CD4-positive, alpha-beta memory T cell (primary cell): ENCODE measurements at regions of chrX and their contacts with region 1.

Region 1: DNA sequence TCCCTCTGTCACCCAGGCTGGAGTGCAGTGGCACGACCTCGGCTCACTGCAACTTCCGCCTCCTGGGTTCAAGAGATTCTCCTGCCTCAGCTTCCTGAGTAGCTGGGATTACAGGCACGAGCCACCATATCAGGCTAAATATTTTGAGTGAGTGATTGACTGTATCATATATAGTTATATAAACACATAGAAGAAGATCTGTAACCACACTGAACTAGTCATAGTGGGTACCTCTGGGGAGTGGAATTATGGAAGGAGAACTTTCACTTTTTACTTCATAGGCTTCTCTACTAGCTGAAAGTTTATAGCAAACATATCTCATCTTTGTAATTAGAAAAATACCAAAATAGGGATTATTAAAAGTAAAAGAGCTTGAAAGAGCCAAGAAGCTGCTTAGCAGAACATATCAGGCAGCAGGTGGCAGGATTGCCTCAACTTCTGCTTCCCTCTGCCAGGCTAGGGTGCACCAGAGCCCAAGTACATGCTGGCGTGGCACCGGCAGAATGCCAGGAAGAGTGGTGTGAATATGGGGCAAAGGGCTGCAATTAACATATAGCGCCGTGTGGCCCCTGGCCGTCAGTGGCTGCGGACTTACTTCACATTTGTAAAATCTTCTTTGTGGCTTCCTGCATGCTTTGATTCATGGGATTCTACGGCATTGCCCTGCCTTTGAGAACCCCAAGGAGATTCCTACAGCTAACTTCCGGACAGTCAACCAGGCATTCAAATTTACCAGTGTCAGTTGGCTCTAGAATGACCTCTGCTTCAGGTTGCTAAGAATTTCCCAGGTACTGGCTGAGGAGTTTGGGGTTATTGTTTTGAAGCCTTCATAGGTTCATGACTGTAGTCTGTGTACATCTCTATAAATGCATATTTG is 39.4 kb upstream of the CD40LG start:
- DNase-seq: peak; percentile 63 to 71 (median 68)
- H3K4me3 ChIP-seq: peak overlapping the region in 1 of 2 donors; percentile 19
- H3K4me3 Mint-ChIP-seq: peak overlapping the region; percentile 55 to 77 (median 67)
- H3K27ac ChIP-seq: peak overlapping the region; percentile 37
- H3K27ac Mint-ChIP-seq: peak overlapping the region; percentile 82 to 94 (median 87)
- H3K4me1 ChIP-seq: peaks cover 46% of the 10 kb centered on the region
- H3K4me1 Mint-ChIP-seq: peaks cover 21 to 58% (median 42%) of the 10 kb centered on the region in 4 donors
- H3K27me3 ChIP-seq: no peaks in the 10 kb centered on the region
- H3K27me3 Mint-ChIP-seq: no peaks in the 10 kb centered on the region

Region 2: GRCh38 chrX:136577552-136577951 is 31.0 kb before region 1 on chrX:
- CTCF ChIA-PET with region 1: interaction called, 71 read pairs
- POLR2A ChIA-PET with region 1: interaction called, 16 read pairs
- intact Hi-C with region 1: loop called (anchors 5 kb)
- DNase-seq: peak; percentile 67 to 77 (median 72)
- H3K4me3 ChIP-seq: no peak overlapping the region
- H3K4me3 Mint-ChIP-seq: peak overlapping the region in 5 of 8 donors; percentile 31 to 58 (median 44)
- H3K27ac ChIP-seq: peak overlapping the region; percentile 38
- H3K27ac Mint-ChIP-seq: peak overlapping the region; percentile 59 to 93 (median 89)
- H3K4me1 ChIP-seq: peaks cover 25% of the 10 kb centered on the region
- H3K4me1 Mint-ChIP-seq: peaks cover 10 to 33% (median 17%) of the 10 kb centered on the region in 4 donors
- H3K27me3 ChIP-seq: no peaks in the 10 kb centered on the region
- H3K27me3 Mint-ChIP-seq: no peaks in the 10 kb centered on the region

Region 3: DNA sequence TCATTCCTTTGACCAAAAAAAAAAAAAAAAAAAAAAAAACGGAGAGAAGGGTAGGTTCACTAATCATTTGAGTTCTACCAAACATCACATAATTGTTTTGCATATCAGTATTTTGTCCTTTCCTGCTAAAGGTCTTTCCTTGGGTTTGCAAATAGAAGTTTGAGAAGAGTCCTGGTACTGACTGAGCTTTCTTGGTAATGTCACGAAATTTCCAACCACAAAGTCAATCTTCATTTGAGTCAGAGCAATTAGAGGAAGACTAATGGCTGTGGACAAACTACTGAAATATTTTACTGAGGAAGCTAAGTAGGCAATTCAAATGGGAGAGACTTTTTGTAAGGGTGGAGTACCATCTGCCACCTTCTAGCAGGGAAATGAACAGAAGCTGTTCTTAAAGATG is 17.7 kb after region 1 on chrX:
- CTCF ChIA-PET with region 1: interaction called, 7 read pairs
- POLR2A ChIA-PET with region 1: interaction called, 21 read pairs
- intact Hi-C with region 1: no loop called
- DNase-seq: no peak
- H3K4me3 ChIP-seq: no peak overlapping the region
- H3K4me3 Mint-ChIP-seq: peak overlapping the region in 7 of 8 donors; percentile 15 to 82 (median 24)
- H3K27ac ChIP-seq: no peak overlapping the region
- H3K27ac Mint-ChIP-seq: peak overlapping the region in 6 of 7 donors; percentile 32 to 94 (median 76)
- H3K4me1 ChIP-seq: peaks cover 90% of the 10 kb centered on the region
- H3K4me1 Mint-ChIP-seq: peaks cover 59 to 91% (median 77%) of the 10 kb centered on the region in 4 donors
- H3K27me3 ChIP-seq: no peaks in the 10 kb centered on the region
- H3K27me3 Mint-ChIP-seq: no peaks in the 10 kb centered on the region

Region 4: GRCh38 chrX:136646602-136647239 is 38.2 kb after region 1 on chrX:
- CTCF ChIA-PET with region 1: interaction called, 30 read pairs
- POLR2A ChIA-PET with region 1: interaction called, 148 read pairs
- intact Hi-C with region 1: no loop called
- DNase-seq: peak; percentile 60 to 79 (median 64)
- H3K4me3 ChIP-seq: peak overlapping the region in 1 of 2 donors; percentile 3
- H3K4me3 Mint-ChIP-seq: peak overlapping the region; percentile 89 to 99 (median 97)
- H3K27ac ChIP-seq: peak overlapping the region; percentile 82
- H3K27ac Mint-ChIP-seq: peak overlapping the region; percentile 66 to 97 (median 91)
- H3K4me1 ChIP-seq: peaks cover 52% of the 10 kb centered on the region
- H3K4me1 Mint-ChIP-seq: peaks cover 34 to 60% (median 43%) of the 10 kb centered on the region in 4 donors
- H3K27me3 ChIP-seq: no peaks in the 10 kb centered on the region
- H3K27me3 Mint-ChIP-seq: no peaks in the 10 kb centered on the region

Region 5: GRCh38 chrX:136658151-136658550 is 49.6 kb after region 1 on chrX:
- CTCF ChIA-PET with region 1: interaction called, 10 read pairs
- POLR2A ChIA-PET with region 1: interaction called, 148 read pairs
- intact Hi-C with region 1: loop called (anchors 2 kb)
- DNase-seq: peak in 1 of 5 donors; percentile 41
- H3K4me3 ChIP-seq: peak overlapping the region in 1 of 2 donors; percentile 23
- H3K4me3 Mint-ChIP-seq: peak overlapping the region; percentile 81 to 99 (median 97)
- H3K27ac ChIP-seq: peak overlapping the region; percentile 60
- H3K27ac Mint-ChIP-seq: peak overlapping the region; percentile 84 to 94 (median 92)
- H3K4me1 ChIP-seq: peaks cover 99% of the 10 kb centered on the region
- H3K4me1 Mint-ChIP-seq: peaks cover 57 to 99% (median 70%) of the 10 kb centered on the region in 4 donors
- H3K27me3 ChIP-seq: no peaks in the 10 kb centered on the region
- H3K27me3 Mint-ChIP-seq: no peaks in the 10 kb centered on the region

Region 6: DNA sequence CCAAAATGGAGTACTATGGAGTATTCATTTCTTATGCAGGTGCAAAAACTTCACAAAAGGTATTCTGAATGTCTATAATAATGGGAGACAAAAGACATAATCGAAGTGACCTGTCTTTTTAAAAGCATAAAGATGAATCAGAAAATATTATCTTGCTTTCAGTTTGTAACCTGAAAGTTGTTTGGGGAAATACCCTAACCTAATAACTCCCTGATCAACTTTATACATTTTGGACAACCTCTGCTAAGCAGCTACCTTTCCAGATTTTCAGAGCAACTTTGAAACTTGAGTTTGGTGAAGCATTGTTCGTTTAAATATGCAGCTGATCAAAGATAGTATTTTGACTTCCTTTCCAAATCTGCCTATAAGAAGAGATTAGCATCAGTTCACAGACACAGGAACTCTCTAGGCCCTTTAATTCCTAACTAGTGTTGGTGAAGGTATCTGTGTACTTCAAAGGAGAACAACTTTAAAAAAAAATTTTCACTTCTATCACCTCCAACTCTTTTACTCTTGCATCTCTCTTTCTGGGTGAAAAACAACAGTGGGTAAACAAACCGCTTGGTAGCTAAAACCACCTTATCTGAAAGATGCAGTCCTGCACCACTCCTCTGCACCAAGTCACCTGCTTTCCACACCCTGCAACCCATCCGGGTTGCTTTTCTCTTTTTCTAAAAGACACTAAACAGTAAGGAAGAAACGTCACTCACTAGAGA is 65.9 kb after region 1 on chrX:
- CTCF ChIA-PET with region 1: interaction called, 5 read pairs
- POLR2A ChIA-PET with region 1: interaction called, 15 read pairs
- intact Hi-C with region 1: loop called (anchors 1 kb)
- DNase-seq: peak; percentile 64 to 79 (median 75)
- H3K4me3 ChIP-seq: peak overlapping the region in 1 of 2 donors; percentile 12
- H3K4me3 Mint-ChIP-seq: peak overlapping the region; percentile 37 to 91 (median 78)
- H3K27ac ChIP-seq: peak overlapping the region; percentile 58
- H3K27ac Mint-ChIP-seq: peak overlapping the region; percentile 89 to 99 (median 94)
- H3K4me1 ChIP-seq: peaks cover 98% of the 10 kb centered on the region
- H3K4me1 Mint-ChIP-seq: peaks cover 68 to 100% (median 79%) of the 10 kb centered on the region in 4 donors
- H3K27me3 ChIP-seq: no peaks in the 10 kb centered on the region
- H3K27me3 Mint-ChIP-seq: no peaks in the 10 kb centered on the region

Region 7: DNA sequence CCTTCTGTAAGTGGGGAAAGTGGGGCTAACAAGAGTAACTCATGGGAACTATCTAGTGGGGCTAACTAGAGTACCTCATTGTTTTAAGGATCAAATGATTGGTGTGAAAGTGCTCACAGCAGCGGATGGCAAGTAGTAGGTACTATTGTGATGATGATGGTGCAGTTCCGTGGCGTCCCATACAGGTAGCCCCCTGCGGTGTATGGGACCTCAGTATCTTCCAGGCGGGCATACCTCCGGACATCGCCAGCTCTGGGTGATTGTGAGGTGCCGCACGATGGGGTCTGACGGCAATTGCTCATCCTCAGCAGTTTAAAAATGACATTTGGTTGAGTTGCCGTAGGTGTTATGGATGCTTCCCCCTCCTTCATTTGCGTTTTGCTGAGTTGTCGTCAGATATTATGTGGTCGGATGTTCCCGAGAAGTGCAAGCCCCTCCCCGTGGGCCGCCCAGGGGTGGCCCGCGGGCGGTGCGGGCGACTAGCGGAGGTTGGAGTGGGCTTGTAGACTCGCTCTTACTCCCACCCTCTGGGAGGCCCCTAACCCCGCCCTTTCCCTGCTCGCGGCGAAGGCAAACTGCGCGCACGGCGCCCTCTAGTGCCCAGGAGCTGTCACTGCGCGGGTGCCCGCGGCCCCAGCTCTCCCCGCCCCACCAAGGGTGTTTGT is 443.6 kb after region 1 on chrX:
- CTCF ChIA-PET with region 1: no interaction called
- POLR2A ChIA-PET with region 1: no interaction called
- intact Hi-C with region 1: loop called (anchors 1 kb)
- DNase-seq: peak; percentile 76 to 84 (median 77)
- H3K4me3 ChIP-seq: peak overlapping the region; percentile 14 to 49
- H3K4me3 Mint-ChIP-seq: peak overlapping the region; percentile 84 to 96 (median 89)
- H3K27ac ChIP-seq: no peak overlapping the region
- H3K27ac Mint-ChIP-seq: peak overlapping the region in 5 of 7 donors; percentile 48 to 89 (median 65)
- H3K4me1 ChIP-seq: peaks cover 9% of the 10 kb centered on the region
- H3K4me1 Mint-ChIP-seq: peaks cover 0 to 11% (median 7%) of the 10 kb centered on the region in 4 donors
- H3K27me3 ChIP-seq: no peaks in the 10 kb centered on the region
- H3K27me3 Mint-ChIP-seq: peaks cover 9 to 14% of the 10 kb centered on the region in 2 donors